ENCODE measurements at regions of chr3 and their contacts with region 1.

Region 1: GRCh38 chr3:39189959-39190269 is 2.5 kb downstream of the XIRP1 start:
- DNase-seq: peak; percentile 14 to 82 (median 53)
- ATAC-seq: peak; percentile 89
- H3K4me3 ChIP-seq: no peak overlapping the region
- H3K4me3 Mint-ChIP-seq: no peak overlapping the region
- H3K27ac ChIP-seq: no peak overlapping the region
- H3K27ac Mint-ChIP-seq: no peak overlapping the region
- H3K4me1 ChIP-seq: no peaks in the 10 kb centered on the region
- H3K4me1 Mint-ChIP-seq: peaks cover 6% of the 10 kb centered on the region
- H3K27me3 ChIP-seq: no peaks in the 10 kb centered on the region
- H3K27me3 Mint-ChIP-seq: no peaks in the 10 kb centered on the region
- CTCF ChIP-seq: peak; percentile 69

Region 2: GRCh38 chr3:39208463-39209055 is 18.6 kb after region 1 on chr3:
- CTCF ChIA-PET with region 1: interaction called, 19 read pairs
- POLR2A ChIA-PET with region 1: no interaction called
- intact Hi-C with region 1: no loop called
- DNase-seq: peak in 5 of 9 experiments; percentile 20 to 78 (median 41)
- ATAC-seq: no peak
- H3K4me3 ChIP-seq: no peak overlapping the region
- H3K4me3 Mint-ChIP-seq: no peak overlapping the region
- H3K27ac ChIP-seq: peak overlapping the region in 1 of 2 experiments; percentile 14
- H3K27ac Mint-ChIP-seq: no peak overlapping the region
- H3K4me1 ChIP-seq: peaks cover 7% of the 10 kb centered on the region
- H3K4me1 Mint-ChIP-seq: peaks cover 6% of the 10 kb centered on the region
- H3K27me3 ChIP-seq: no peaks in the 10 kb centered on the region
- H3K27me3 Mint-ChIP-seq: peaks cover 2% of the 10 kb centered on the region
- CTCF ChIP-seq: peak; percentile 44

Region 3: GRCh38 chr3:39279745-39280517 is 90.0 kb after region 1 on chr3 and contains the start of gene CX3CR1:
- CTCF ChIA-PET with region 1: interaction called, 15 read pairs
- POLR2A ChIA-PET with region 1: interaction called, 3 read pairs
- intact Hi-C with region 1: no loop called
- DNase-seq: peak in 2 of 9 experiments; percentile 23 to 48
- ATAC-seq: peak; percentile 17
- H3K4me3 ChIP-seq: peak within 1 kb of the TSS; percentile 22 to 76
- H3K4me3 Mint-ChIP-seq: peak within 1 kb of the TSS; percentile 75
- H3K27ac ChIP-seq: peak within 1 kb of the TSS; percentile 33 to 85
- H3K27ac Mint-ChIP-seq: peak within 1 kb of the TSS; percentile 64
- H3K4me1 ChIP-seq: no peaks in the 10 kb centered on the region
- H3K4me1 Mint-ChIP-seq: peaks cover 26% of the 10 kb centered on the region
- H3K27me3 ChIP-seq: no peaks in the 10 kb centered on the region
- H3K27me3 Mint-ChIP-seq: no peaks in the 10 kb centered on the region
- CTCF ChIP-seq: no peak
- total RNA-seq, gene CX3CR1: 0.42 to 0.49 TPM

Region 4: GRCh38 chr3:39378088-39378487 is 188.2 kb after region 1 on chr3:
- CTCF ChIA-PET with region 1: interaction called, 15 read pairs
- POLR2A ChIA-PET with region 1: interaction called, 3 read pairs
- intact Hi-C with region 1: loop called (anchors 1 to 2 kb)
- DNase-seq: peak; percentile 23 to 78 (median 63)
- ATAC-seq: peak; percentile 81
- H3K4me3 ChIP-seq: no peak overlapping the region
- H3K4me3 Mint-ChIP-seq: no peak overlapping the region
- H3K27ac ChIP-seq: no peak overlapping the region
- H3K27ac Mint-ChIP-seq: no peak overlapping the region
- H3K4me1 ChIP-seq: peaks cover 6% of the 10 kb centered on the region
- H3K4me1 Mint-ChIP-seq: peaks cover 11% of the 10 kb centered on the region
- H3K27me3 ChIP-seq: no peaks in the 10 kb centered on the region
- H3K27me3 Mint-ChIP-seq: peaks cover 6% of the 10 kb centered on the region
- CTCF ChIP-seq: peak; percentile 65

Region 5: DNA sequence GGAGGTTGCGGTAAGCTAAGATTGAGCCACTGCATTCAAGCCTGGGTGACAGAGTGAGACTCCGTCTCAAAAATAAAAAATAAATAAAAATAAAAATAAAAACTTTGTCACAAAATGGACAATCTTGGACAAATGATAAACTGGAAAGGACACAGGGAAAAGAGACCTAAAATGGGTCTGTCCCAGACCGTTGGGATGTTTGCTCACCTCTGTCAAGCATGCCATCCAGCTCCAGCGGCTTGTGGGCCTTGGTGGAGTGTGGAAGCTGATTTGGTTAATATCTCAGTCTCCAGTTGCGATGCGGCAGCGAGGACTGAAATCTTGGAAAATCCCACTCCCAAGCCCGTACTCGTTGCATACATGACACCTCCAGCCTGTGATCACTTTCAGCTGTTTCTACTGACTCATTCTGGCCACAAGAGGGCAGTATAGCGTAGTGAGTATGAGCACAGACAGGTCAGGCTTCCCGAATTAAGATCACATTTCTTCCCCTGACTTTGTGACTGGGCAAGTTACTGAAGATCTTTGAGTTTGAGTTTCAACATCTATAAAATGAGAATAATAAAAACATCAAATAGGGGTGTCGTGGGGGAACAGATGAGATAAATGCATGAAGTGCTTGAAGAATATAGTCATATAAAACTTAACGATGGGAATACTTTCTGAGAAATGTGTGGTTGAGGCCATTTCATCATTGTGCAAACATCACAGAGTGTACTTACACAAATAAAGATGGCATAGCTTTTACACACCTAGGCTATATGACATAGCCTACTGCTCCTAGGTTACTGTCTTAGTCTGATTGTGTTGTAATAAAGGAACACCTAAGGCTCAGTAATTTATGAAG is 257.9 kb after region 1 on chr3:
- CTCF ChIA-PET with region 1: no interaction called
- POLR2A ChIA-PET with region 1: no interaction called
- intact Hi-C with region 1: no loop called
- DNase-seq: peak in 8 of 9 experiments; percentile 39 to 83 (median 66)
- ATAC-seq: peak; percentile 82
- H3K4me3 ChIP-seq: no peak overlapping the region
- H3K4me3 Mint-ChIP-seq: no peak overlapping the region
- H3K27ac ChIP-seq: no peak overlapping the region
- H3K27ac Mint-ChIP-seq: no peak overlapping the region
- H3K4me1 ChIP-seq: no peaks in the 10 kb centered on the region
- H3K4me1 Mint-ChIP-seq: peaks cover 4% of the 10 kb centered on the region
- H3K27me3 ChIP-seq: no peaks in the 10 kb centered on the region
- H3K27me3 Mint-ChIP-seq: no peaks in the 10 kb centered on the region
- CTCF ChIP-seq: peak; percentile 94